ENCODE measurements at regions of chr15 and their contacts with region 1.

Region 1: GRCh38 chr15:69489073-69489571 is 36.5 kb downstream of the RPLP1 start:
- DNase-seq: no peak
- H3K4me3 ChIP-seq: no peak overlapping the region
- H3K27ac ChIP-seq: no peak overlapping the region
- H3K4me1 ChIP-seq: peaks cover 10% of the 10 kb centered on the region
- H3K27me3 ChIP-seq: no peaks in the 10 kb centered on the region
- CTCF ChIP-seq: no peak

Region 2: DNA sequence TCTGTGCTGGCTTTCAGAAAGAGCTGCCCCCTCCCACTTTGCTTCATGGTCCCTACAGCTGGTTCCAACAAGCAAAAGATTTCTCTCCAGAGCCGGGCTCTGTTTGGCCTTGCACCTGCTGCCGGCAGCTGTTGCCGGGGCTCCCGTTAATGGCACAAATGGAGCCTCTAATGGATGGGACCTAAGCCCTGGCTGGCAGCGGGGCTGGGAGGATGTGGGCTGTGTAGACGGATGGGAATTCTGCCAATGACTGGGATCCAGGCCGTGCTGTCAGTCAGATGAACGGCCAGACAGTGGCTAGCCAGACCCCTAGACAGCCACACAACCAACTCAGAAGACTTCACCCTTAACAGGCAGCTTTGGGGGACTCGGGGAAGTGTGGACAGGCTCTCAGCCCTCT is 51.5 kb after region 1 on chr15:
- CTCF ChIA-PET with region 1: no interaction called
- POLR2A ChIA-PET with region 1: no interaction called
- intact Hi-C with region 1: no loop called
- DNase-seq: no peak
- H3K4me3 ChIP-seq: no peak overlapping the region
- H3K27ac ChIP-seq: no peak overlapping the region
- H3K4me1 ChIP-seq: 0 out of 2 replicates have a peak, but pooled peaks cover 2% of the 10 kb centered on the region
- H3K27me3 ChIP-seq: no peaks in the 10 kb centered on the region
- CTCF ChIP-seq: no peak

Region 3: GRCh38 chr15:69557340-69558137 is 68.4 kb after region 1 on chr15:
- CTCF ChIA-PET with region 1: no interaction called
- POLR2A ChIA-PET with region 1: no interaction called
- intact Hi-C with region 1: loop called (anchors 5 kb)
- DNase-seq: peak; percentile 67 to 95
- H3K4me3 ChIP-seq: no peak overlapping the region
- H3K27ac ChIP-seq: peak overlapping the region; percentile 63
- H3K4me1 ChIP-seq: peaks cover 54% of the 10 kb centered on the region
- H3K27me3 ChIP-seq: no peaks in the 10 kb centered on the region
- CTCF ChIP-seq: no peak

Region 4: DNA sequence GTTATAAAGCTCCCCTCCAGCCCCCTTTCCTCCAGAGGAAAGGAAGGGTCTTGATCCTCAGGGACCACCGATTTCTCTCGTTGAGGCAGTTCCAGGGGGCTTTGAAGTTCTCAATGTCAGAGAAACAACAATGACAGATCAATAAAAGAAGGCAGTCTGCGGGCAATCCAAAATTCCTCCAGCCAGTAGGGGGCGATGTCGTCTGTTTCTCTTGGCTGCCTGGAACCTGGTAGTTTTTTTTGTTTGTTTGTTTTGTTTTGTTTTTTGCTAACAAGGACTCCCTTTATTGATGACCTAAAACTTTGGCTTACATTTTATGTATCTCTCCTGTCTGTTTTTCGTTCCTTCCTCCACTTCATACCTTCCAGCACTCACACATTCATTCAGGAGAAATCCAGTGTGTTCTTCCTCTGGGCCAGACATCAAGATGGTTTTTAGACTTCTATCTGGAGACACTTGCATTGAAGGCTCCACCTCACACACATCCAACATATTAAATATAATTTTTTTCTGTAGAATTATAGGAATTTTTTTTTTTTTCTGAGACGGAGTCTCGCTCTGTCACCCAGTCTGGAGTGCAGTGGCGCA is 240.1 kb after region 1 on chr15:
- CTCF ChIA-PET with region 1: no interaction called
- POLR2A ChIA-PET with region 1: no interaction called
- intact Hi-C with region 1: loop called (anchors 10 kb)
- DNase-seq: peak in 1 of 2 experiments; percentile 27
- H3K4me3 ChIP-seq: no peak overlapping the region
- H3K27ac ChIP-seq: no peak overlapping the region
- H3K4me1 ChIP-seq: peaks cover 19% of the 10 kb centered on the region
- H3K27me3 ChIP-seq: no peaks in the 10 kb centered on the region
- CTCF ChIP-seq: peak; percentile 78

Measured in PC-9 (cell line).